ENCODE measurements at regions of chr14 and their contacts with region 1.

Region 1: DNA sequence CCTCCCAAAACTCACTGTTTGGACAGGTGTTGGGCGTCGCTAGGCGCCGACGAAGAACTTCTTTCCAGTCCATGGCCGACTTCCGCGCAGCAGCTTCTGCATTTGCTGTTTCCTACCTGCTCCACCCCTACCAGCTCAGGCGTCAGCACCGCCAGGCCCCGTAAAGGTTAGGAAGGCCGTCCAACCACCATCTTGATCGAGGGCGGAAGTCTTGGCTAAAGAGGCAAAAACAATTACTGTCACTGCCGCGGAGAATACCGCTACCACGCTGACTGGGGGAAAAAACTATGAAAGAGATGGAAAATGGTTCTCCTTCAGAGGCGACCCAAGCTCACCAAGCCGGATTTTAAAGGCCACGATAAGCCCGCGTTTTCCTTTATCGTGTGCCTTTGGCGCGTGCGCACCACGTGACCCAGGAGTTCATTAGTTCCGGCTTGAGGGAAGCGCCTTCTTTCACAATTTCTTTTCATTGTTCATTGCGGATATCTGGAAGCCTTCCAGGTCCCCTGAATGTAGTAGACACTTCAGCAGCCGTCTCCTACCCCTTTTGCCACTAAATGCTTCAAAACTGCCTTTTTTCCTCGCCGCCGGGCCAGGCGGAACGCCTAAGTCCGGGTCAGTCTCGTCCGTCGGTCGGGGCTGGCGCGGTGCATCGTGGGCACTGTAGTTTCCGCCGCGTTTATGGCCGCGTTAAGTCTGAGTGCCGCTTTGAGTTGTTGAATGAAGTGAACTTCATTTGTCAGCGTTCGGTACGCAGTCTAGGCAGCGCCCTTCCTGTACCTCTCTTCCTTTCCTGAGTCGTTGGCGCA is at the starts of genes PPP2R3C and PRORP:
- DNase-seq: peak; percentile 97
- ATAC-seq: peak; percentile 89
- H3K4me3 ChIP-seq: peak within 1 kb of the TSS; percentile 70 to 97 (median 77)
- H3K4me3 Mint-ChIP-seq: peak within 1 kb of the TSS; percentile 100
- H3K27ac ChIP-seq: peak within 1 kb of the TSS; percentile 94 to 100
- H3K27ac Mint-ChIP-seq: peak within 1 kb of the TSS; percentile 99
- H3K4me1 ChIP-seq: peaks cover 19 to 24% of the 10 kb centered on the region in 2 donors
- H3K4me1 Mint-ChIP-seq: peaks cover 53% of the 10 kb centered on the region
- H3K27me3 ChIP-seq: no peaks in the 10 kb centered on the region
- H3K27me3 Mint-ChIP-seq: no peaks in the 10 kb centered on the region
- CTCF ChIP-seq: no peak
- total RNA-seq, gene PPP2R3C: 40.8 and 41.7 TPM in 2 replicates
- total RNA-seq, gene PRORP: 16.4 and 22.2 TPM in 2 replicates

Region 2: DNA sequence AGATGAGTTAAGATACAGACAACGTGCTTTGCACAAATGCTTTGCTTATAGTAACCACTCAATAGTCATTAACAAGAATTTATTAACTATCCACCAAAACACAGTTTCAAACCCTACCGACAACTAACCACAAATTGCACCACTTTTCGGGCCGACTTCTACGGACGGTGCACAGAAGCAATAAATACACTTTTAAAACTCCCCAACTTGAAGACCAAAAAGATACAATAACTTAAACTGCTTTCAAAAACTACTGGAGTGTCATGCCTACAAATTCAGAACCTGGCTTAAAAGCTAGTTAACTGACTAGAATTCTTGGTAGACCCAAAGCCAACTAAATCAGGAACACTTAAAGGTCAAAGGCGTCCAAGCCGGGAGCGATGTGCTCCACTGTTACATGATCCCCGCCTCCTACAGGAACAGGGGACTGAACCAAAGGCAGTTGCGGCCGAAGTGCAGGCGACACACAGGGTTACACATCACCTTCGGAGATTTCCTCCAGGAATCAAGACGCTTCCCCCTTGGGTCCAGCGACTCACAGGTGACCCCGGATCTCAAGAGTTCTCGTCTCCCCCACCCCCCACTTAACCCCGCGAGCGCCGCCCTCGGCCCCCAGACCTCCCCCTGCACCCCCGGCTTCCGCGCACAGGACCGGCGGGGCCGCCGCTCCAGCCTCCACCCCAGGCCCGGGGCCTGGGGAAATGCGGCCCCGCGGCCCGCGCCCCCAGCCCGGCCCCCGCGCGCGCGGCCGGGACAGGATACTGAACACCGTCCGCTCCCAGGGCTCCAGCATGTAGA is 660.6 kb before region 1 on chr14:
- CTCF ChIA-PET with region 1: no interaction called
- POLR2A ChIA-PET with region 1: no interaction called
- intact Hi-C with region 1: loop called (anchors 2 kb)
- DNase-seq: peak; percentile 50
- ATAC-seq: no peak
- H3K4me3 ChIP-seq: peak overlapping the region; percentile 50 to 95 (median 64)
- H3K4me3 Mint-ChIP-seq: peak overlapping the region; percentile 86
- H3K27ac ChIP-seq: peak overlapping the region; percentile 16 to 60
- H3K27ac Mint-ChIP-seq: peak overlapping the region; percentile 91
- H3K4me1 ChIP-seq: peaks cover 8 to 15% of the 10 kb centered on the region in 2 donors
- H3K4me1 Mint-ChIP-seq: peaks cover 18% of the 10 kb centered on the region
- H3K27me3 ChIP-seq: no peaks in the 10 kb centered on the region
- H3K27me3 Mint-ChIP-seq: no peaks in the 10 kb centered on the region
- CTCF ChIP-seq: no peak

Region 3: DNA sequence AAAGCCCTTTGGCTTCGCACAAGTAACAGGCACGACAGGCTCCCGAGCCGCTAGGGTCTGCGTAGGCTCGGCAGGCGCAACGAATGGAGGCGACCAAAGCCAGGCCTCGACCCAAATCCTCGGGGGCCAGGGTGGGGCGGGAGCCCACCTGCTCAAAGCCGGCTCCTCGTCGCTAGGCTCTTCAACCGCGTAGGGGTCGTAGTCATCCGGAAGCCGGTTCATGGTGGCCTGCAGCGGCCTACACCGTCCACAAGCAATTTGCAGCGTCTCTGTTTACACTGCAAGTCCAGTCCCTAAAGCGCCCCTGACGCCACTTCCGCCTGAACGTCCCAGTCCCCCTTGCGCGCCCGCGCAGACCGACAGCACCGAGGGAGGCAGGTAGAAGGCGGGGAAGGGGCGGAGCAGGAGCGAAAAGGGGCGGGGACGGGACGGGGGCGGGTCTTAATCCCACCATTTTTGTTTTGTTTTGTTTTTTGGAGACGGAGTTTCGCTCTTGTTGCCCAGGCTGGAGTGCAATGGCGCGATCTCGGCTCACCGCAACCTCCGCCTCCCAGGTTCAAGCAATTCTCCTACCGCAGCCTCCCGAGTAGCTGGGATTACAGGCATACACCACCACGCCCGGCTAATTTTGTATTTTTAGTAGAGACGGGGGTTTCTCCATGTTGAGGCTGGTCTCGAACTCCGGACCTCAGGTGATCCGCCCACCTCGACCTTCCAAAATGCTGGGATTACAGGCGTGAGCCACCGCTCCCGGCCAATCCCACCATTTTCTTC is 582.5 kb before region 1 on chr14 and contains the start of gene EAPP:
- CTCF ChIA-PET with region 1: no interaction called
- POLR2A ChIA-PET with region 1: no interaction called
- intact Hi-C with region 1: loop called (anchors 5 kb)
- DNase-seq: peak; percentile 96
- ATAC-seq: peak; percentile 99
- H3K4me3 ChIP-seq: peak within 1 kb of the TSS; percentile 44 to 97 (median 89)
- H3K4me3 Mint-ChIP-seq: peak within 1 kb of the TSS; percentile 99
- H3K27ac ChIP-seq: peak within 1 kb of the TSS; percentile 91 to 97
- H3K27ac Mint-ChIP-seq: peak within 1 kb of the TSS; percentile 99
- H3K4me1 ChIP-seq: peaks cover 18 to 24% of the 10 kb centered on the region in 2 donors
- H3K4me1 Mint-ChIP-seq: peaks cover 21% of the 10 kb centered on the region
- H3K27me3 ChIP-seq: no peaks in the 10 kb centered on the region
- H3K27me3 Mint-ChIP-seq: no peaks in the 10 kb centered on the region
- CTCF ChIP-seq: no peak
- total RNA-seq, gene EAPP: 54.8 and 58.0 TPM in 2 replicates

Region 4: GRCh38 chr14:34629657-34630529 is 492.2 kb before region 1 on chr14 and contains the start of gene SNX6:
- CTCF ChIA-PET with region 1: no interaction called
- POLR2A ChIA-PET with region 1: no interaction called
- intact Hi-C with region 1: loop called (anchors 1 kb)
- DNase-seq: peak; percentile 89
- ATAC-seq: peak; percentile 98
- H3K4me3 ChIP-seq: peak within 1 kb of the TSS; percentile 50 to 98 (median 96)
- H3K4me3 Mint-ChIP-seq: peak within 1 kb of the TSS; percentile 95
- H3K27ac ChIP-seq: peak within 1 kb of the TSS; percentile 85 to 94
- H3K27ac Mint-ChIP-seq: peak within 1 kb of the TSS; percentile 93
- H3K4me1 ChIP-seq: peaks cover 11 to 18% of the 10 kb centered on the region in 2 donors
- H3K4me1 Mint-ChIP-seq: peaks cover 18% of the 10 kb centered on the region
- H3K27me3 ChIP-seq: peaks cover 0 to 3% (median 0%) of the 10 kb centered on the region in 4 experiments
- H3K27me3 Mint-ChIP-seq: no peaks in the 10 kb centered on the region
- CTCF ChIP-seq: no peak
- total RNA-seq, gene SNX6: 61.0 and 66.3 TPM in 2 replicates

Region 5: DNA sequence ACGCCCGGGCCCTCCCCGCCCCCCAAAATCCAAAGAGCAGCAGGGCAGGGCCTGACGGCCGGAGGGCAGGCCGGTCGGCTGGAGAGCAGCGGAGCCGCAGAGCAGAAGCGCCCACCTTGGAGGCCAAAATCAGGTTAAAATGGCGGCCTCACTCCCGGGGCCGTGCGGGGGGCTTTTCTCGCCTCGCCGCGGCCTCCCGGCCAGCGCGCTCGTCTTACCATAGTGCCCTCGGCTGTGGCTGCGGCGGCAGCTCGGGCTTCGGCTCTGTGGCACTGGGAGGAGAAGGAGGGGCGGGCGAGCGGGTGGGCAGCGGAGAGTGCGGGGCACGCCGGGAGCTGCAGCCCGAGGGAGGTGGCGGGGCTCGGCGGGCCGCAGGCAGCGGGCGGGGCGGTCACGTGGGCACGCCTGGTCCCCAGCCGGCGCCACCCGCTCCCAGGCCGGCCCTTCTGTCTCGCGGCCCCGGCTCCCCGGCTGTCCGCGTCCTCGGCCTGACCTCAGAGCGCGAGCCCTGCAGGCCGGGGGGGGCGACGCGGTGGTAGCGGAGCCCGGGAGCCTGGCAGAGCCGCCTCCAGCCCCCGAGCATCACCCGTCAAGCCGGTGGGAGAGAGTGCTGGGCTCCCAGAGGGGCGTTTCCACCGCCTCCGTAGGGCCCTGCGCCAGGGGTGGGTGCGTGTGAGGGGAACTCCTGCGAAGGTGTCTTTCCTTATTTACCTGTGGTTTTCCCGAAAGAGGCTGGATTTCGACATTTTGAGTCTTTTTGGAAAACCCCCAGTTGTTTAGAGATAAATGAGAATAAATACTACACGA is 407.6 kb before region 1 on chr14 and contains the start of gene CFL2:
- CTCF ChIA-PET with region 1: no interaction called
- POLR2A ChIA-PET with region 1: no interaction called
- intact Hi-C with region 1: loop called (anchors 1 kb)
- DNase-seq: peak; percentile 86
- ATAC-seq: peak; percentile 91
- H3K4me3 ChIP-seq: peak within 1 kb of the TSS; percentile 61 to 91 (median 81)
- H3K4me3 Mint-ChIP-seq: peak within 1 kb of the TSS; percentile 94
- H3K27ac ChIP-seq: peak within 1 kb of the TSS; percentile 75 to 87
- H3K27ac Mint-ChIP-seq: peak within 1 kb of the TSS; percentile 94
- H3K4me1 ChIP-seq: peaks cover 11 to 15% of the 10 kb centered on the region in 2 donors
- H3K4me1 Mint-ChIP-seq: peaks cover 29% of the 10 kb centered on the region
- H3K27me3 ChIP-seq: no peaks in the 10 kb centered on the region
- H3K27me3 Mint-ChIP-seq: no peaks in the 10 kb centered on the region
- CTCF ChIP-seq: no peak
- total RNA-seq, gene CFL2: 21.9 and 25.2 TPM in 2 replicates

Region 6: GRCh38 chr14:35107866-35108265 is 14.2 kb before region 1 on chr14:
- CTCF ChIA-PET with region 1: no interaction called
- POLR2A ChIA-PET with region 1: no interaction called
- intact Hi-C with region 1: no loop called
- DNase-seq: no peak
- ATAC-seq: no peak
- H3K4me3 ChIP-seq: no peak overlapping the region
- H3K4me3 Mint-ChIP-seq: no peak overlapping the region
- H3K27ac ChIP-seq: no peak overlapping the region
- H3K27ac Mint-ChIP-seq: no peak overlapping the region
- H3K4me1 ChIP-seq: no peaks in the 10 kb centered on the region
- H3K4me1 Mint-ChIP-seq: no peaks in the 10 kb centered on the region
- H3K27me3 ChIP-seq: no peaks in the 10 kb centered on the region
- H3K27me3 Mint-ChIP-seq: no peaks in the 10 kb centered on the region
- CTCF ChIP-seq: no peak

Region 7: DNA sequence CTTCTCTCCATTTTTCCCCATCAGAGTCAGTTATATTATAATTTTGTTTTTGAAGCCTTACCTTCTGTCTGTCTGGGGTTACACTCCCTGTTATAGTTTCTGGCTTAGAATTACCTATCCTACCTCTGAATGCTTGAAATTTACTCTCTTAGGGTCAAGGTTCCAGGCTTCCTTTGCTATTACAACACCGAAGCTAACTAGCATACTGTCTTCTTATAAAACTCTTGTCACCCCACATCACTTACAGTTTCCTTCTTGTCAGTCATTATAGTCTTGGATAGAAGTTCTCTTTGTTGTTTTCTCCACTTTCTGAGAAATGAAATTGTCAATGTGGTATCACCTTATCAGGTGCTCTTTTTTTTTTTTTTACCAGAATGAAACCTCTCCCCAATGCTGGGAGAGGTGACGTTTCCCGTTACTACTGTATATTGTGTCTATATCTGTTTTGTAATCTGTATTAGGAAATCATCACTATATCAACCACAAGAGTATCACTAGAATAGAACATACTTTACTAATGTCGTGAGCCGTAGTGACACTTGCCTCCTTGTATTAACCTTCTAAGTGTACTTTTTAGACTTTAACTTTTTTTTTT is 100.9 kb after region 1 on chr14:
- CTCF ChIA-PET with region 1: no interaction called
- POLR2A ChIA-PET with region 1: no interaction called
- intact Hi-C with region 1: no loop called
- DNase-seq: no peak
- ATAC-seq: no peak
- H3K4me3 ChIP-seq: no peak overlapping the region
- H3K4me3 Mint-ChIP-seq: no peak overlapping the region
- H3K27ac ChIP-seq: no peak overlapping the region
- H3K27ac Mint-ChIP-seq: no peak overlapping the region
- H3K4me1 ChIP-seq: no peaks in the 10 kb centered on the region
- H3K4me1 Mint-ChIP-seq: no peaks in the 10 kb centered on the region
- H3K27me3 ChIP-seq: no peaks in the 10 kb centered on the region
- H3K27me3 Mint-ChIP-seq: no peaks in the 10 kb centered on the region
- CTCF ChIP-seq: no peak

Region 8: DNA sequence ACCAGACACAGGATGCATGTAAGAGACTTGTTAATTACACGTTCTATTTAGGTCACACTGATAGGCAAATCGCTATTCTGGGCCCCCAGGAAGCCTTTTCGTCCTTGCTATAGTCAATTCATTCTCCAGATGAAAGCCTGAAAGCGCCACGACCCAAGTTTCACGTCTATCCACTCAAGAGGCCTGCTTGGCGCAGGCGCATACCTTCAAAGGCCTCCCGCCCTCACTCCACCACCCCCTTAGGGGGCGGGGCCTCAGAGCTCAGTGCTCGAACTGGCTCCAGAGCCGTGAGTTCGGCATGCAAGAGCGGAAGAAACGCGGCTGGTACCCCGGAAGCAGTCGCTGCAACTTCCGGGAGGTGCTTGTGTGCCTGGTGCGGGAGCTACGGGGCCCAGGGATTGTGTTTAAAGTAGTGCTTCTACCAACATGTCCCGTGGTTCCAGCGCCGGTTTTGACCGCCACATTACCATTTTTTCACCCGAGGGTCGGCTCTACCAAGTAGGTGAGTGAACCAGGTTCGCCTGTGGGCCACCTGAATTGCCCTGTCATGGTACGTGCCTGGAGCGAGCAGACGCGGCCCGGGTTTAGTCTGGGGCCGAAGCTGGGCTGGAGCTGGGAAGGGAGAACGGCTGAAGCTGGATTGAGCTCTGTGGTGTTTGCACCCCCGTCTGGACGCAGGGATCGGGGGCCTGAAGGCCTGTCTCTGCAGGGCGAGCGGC is 170.1 kb after region 1 on chr14 and contains the start of gene PSMA6:
- CTCF ChIA-PET with region 1: no interaction called
- POLR2A ChIA-PET with region 1: interaction called, 6 read pairs
- intact Hi-C with region 1: loop called (anchors 1 kb)
- DNase-seq: peak; percentile 99
- ATAC-seq: peak; percentile 98
- H3K4me3 ChIP-seq: peak within 1 kb of the TSS; percentile 71 to 96 (median 93)
- H3K4me3 Mint-ChIP-seq: peak within 1 kb of the TSS; percentile 99
- H3K27ac ChIP-seq: peak within 1 kb of the TSS; percentile 75 to 93
- H3K27ac Mint-ChIP-seq: peak within 1 kb of the TSS; percentile 96
- H3K4me1 ChIP-seq: peaks cover 34 to 44% of the 10 kb centered on the region in 2 donors
- H3K4me1 Mint-ChIP-seq: peaks cover 44% of the 10 kb centered on the region
- H3K27me3 ChIP-seq: no peaks in the 10 kb centered on the region
- H3K27me3 Mint-ChIP-seq: no peaks in the 10 kb centered on the region
- CTCF ChIP-seq: no peak
- total RNA-seq, gene PSMA6: 70.6 and 86.8 TPM in 2 replicates

Region 9: GRCh38 chr14:35808076-35808652 is 686.1 kb after region 1 on chr14:
- CTCF ChIA-PET with region 1: no interaction called
- POLR2A ChIA-PET with region 1: no interaction called
- intact Hi-C with region 1: loop called (anchors 2 kb)
- DNase-seq: no peak
- ATAC-seq: no peak
- H3K4me3 ChIP-seq: peak overlapping the region; percentile 57 to 81 (median 70)
- H3K4me3 Mint-ChIP-seq: peak overlapping the region; percentile 98
- H3K27ac ChIP-seq: peak overlapping the region; percentile 78 to 88
- H3K27ac Mint-ChIP-seq: peak overlapping the region; percentile 95
- H3K4me1 ChIP-seq: peaks cover 12 to 14% of the 10 kb centered on the region in 2 donors
- H3K4me1 Mint-ChIP-seq: peaks cover 29% of the 10 kb centered on the region
- H3K27me3 ChIP-seq: no peaks in the 10 kb centered on the region
- H3K27me3 Mint-ChIP-seq: no peaks in the 10 kb centered on the region
- CTCF ChIP-seq: no peak